Activated naive CD8-positive, alpha-beta T cell treated with anti-CD3 and anti-CD28 coated beads, Interleukin-2, amount 10 ng/mL, durations not matched to agents 7 days and 5 days (primary cell): ENCODE measurements at regions of chr17 and their contacts with region 1.

Region 1: GRCh38 chr17:67824735-67825626 is at the start of gene BPTF:
- DNase-seq: peak; percentile 96
- ATAC-seq: peak; percentile 84
- H3K4me3 Mint-ChIP-seq: peak within 1 kb of the TSS; percentile 94
- H3K27ac Mint-ChIP-seq: peak within 1 kb of the TSS; percentile 98
- H3K4me1 Mint-ChIP-seq: peaks cover 15% of the 10 kb centered on the region
- H3K27me3 Mint-ChIP-seq: peaks cover 8% of the 10 kb centered on the region
- total RNA-seq, gene BPTF: 126 to 133 TPM

Region 2: DNA sequence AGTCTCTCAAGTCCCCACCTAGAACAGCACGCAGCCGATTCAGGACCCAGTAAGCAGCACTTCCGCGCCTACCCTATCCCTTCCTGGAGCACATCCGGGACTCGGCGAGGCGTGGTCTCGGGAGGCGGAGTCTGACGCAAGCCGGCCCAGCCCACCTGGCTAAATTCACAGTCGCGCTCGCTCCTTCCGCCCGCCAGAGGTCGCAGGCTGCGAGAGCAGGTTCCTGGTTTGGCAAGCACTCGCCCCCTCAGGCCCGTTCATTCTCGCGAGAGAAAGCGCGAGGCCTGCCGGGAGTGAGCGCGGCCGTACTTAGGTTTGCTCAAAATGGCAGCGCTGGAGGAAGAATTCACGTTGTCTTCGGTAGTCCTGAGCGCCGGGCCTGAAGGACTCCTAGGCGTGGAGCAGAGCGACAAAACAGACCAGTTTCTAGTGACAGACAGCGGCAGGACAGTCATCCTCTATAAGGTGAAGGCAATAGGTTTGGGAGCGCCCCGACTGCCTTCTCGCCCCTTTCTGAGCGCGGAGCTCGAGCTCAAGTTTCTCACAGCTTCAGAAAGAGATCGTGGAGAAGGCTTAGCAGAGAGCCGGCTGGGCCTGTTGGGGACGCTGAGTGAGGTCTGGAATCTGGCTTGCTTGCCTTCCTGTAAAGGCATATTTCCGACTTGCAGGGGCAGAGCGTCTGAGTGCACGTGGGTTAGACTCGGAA is 107.2 kb before region 1 on chr17 and contains the start of gene NOL11:
- POLR2A ChIA-PET with region 1: interaction called, 13 read pairs
- DNase-seq: peak; percentile 100
- ATAC-seq: peak; percentile 96
- H3K4me3 Mint-ChIP-seq: peak within 1 kb of the TSS; percentile 99
- H3K27ac Mint-ChIP-seq: peak within 1 kb of the TSS; percentile 98
- H3K4me1 Mint-ChIP-seq: peaks cover 19% of the 10 kb centered on the region
- H3K27me3 Mint-ChIP-seq: no peaks in the 10 kb centered on the region
- total RNA-seq, gene NOL11: 42.2 to 48.9 TPM

Region 3: GRCh38 chr17:67800495-67800928 is 24.5 kb before region 1 on chr17:
- POLR2A ChIA-PET with region 1: no interaction called
- DNase-seq: peak; percentile 54
- ATAC-seq: peak; percentile 71
- H3K4me3 Mint-ChIP-seq: no peak overlapping the region
- H3K27ac Mint-ChIP-seq: no peak overlapping the region
- H3K4me1 Mint-ChIP-seq: no peaks in the 10 kb centered on the region
- H3K27me3 Mint-ChIP-seq: peaks cover 12% of the 10 kb centered on the region